ENCODE measurements at regions of chr2 and their contacts with region 1.

Region 1: GRCh38 chr2:162449471-162449870 is 105.5 kb downstream of the GCA start:
- DNase-seq: no peak
- H3K4me3 ChIP-seq: no peak overlapping the region
- H3K27ac ChIP-seq: no peak overlapping the region
- H3K4me1 ChIP-seq: no peaks in the 10 kb centered on the region
- H3K27me3 ChIP-seq: no peaks in the 10 kb centered on the region
- CTCF ChIP-seq: no peak

Region 2: DNA sequence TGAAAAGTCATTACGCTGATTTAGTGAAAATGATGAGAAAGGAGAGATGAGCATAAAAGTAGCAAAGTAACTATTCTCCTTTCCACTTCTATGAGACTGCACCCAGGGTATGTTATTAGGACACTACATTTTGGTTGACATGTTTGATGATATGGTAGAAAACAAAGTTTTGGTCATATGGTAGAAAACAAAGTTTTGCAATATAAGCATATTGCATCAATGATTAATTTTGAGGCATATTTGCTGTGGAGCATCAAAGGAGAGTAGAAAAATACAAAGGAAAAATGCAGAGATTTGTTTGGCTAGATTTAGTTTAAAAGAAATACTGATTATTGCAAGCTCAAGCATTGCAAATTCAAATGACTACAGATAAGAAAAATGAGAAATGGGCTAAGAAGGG is 207.0 kb after region 1 on chr2:
- CTCF ChIA-PET with region 1: no interaction called
- POLR2A ChIA-PET with region 1: no interaction called
- intact Hi-C with region 1: loop called (anchors 10 kb)
- DNase-seq: no peak
- H3K4me3 ChIP-seq: no peak overlapping the region
- H3K27ac ChIP-seq: no peak overlapping the region
- H3K4me1 ChIP-seq: no peaks in the 10 kb centered on the region
- H3K27me3 ChIP-seq: no peaks in the 10 kb centered on the region
- CTCF ChIP-seq: no peak

Measured in PC-9 (cell line).